Sigmoid colon (tissue), 7 donors: ENCODE measurements at regions of chr5 and their contacts with region 1.

Region 1: DNA sequence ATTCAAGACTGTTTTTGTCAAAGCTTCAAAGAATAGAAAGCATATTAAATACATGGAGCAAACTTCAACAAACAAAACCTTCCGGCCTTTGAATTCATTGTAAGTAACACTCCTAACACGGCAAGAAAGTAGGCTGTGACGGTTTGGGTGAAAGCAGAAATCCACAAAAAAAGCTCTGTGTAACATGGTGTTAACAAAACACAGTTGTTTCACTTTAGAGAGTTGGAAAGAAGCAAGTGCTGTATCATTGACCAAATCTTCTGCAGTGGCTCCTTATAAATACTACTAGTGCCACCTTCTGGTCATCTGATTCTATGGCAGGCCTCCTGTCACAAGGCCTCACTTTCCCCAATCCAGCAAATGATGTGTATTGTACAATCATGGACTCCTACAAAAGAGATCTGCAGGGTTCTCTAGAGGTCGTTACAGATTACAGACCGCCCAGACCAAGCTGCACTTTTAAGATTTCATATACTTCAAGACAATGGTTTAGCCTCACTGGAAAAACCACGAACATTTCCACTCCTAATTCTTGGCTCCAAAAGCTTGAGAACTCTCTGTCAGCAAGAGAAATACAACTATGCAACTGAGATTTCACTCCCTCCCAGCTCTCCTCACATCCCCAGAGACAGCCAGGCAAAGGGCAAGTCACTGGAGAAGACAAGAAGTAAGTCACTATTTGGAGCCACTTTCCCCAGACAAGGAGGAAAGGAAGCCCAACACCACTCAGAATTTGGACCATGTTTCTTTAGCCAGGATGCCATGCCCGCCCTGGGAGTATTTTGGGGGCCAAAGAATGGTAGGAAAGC is 196.2 kb downstream of the DTWD2 start:
- DNase-seq: no peak
- H3K4me3 ChIP-seq: peak overlapping the region in 3 of 4 donors; percentile 7 to 33 (median 28)
- H3K27ac ChIP-seq: peak overlapping the region in 3 of 4 donors; percentile 39 to 66 (median 63)
- H3K4me1 ChIP-seq: peaks cover 0 to 17% (median 8%) of the 10 kb centered on the region in 4 donors
- H3K27me3 ChIP-seq: no peaks in the 10 kb centered on the region
- CTCF ChIP-seq: peak; percentile 29 to 78 (median 62)
- EP300 ChIP-seq: no peak
- POLR2A ChIP-seq: no peak

Region 2: GRCh38 chr5:117454716-117455596 is 1337.2 kb before region 1 on chr5:
- intact Hi-C with region 1: loop called (anchors 5 kb)
- DNase-seq: no peak
- H3K4me3 ChIP-seq: no peak overlapping the region
- H3K27ac ChIP-seq: no peak overlapping the region
- H3K4me1 ChIP-seq: no peaks in the 10 kb centered on the region
- H3K27me3 ChIP-seq: no peaks in the 10 kb centered on the region
- CTCF ChIP-seq: peak in 3 of 4 experiments; percentile 47 to 61 (median 48)
- EP300 ChIP-seq: no peak
- POLR2A ChIP-seq: no peak

Region 3: DNA sequence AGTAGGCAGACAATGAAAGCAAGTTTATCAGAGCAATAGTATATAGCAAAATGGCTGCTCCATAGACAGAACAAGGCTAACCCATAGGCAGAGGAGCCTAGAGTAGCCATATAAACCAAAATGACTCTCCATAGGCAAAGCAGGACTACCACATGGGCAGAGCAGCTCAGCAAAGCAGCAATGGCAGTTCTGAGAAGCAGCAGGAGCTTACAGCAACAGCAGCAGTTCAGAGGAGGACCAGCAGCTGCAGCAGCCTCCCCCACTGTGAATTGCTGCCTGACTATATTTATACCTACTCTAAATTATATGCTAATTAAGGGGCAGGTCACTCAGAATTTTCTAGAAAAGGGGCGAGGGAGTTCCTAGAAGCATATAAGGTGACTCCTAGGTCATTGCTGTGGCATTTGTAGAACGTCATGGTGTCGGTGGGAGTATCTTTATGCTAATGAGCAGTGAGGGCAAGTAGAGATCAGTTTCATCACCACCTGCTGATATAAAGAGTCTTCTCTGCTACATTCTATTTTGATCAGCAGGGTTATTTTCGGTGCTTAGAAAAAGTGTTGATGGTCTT is 919.2 kb before region 1 on chr5:
- intact Hi-C with region 1: no loop called
- DNase-seq: no peak
- H3K4me3 ChIP-seq: no peak overlapping the region
- H3K27ac ChIP-seq: no peak overlapping the region
- H3K4me1 ChIP-seq: no peaks in the 10 kb centered on the region
- H3K27me3 ChIP-seq: no peaks in the 10 kb centered on the region
- CTCF ChIP-seq: no peak
- EP300 ChIP-seq: no peak
- POLR2A ChIP-seq: no peak

Region 4: GRCh38 chr5:118956727-118957126 is 164.6 kb after region 1 on chr5:
- intact Hi-C with region 1: no loop called
- DNase-seq: no peak
- H3K4me3 ChIP-seq: no peak overlapping the region
- H3K27ac ChIP-seq: no peak overlapping the region
- H3K4me1 ChIP-seq: no peaks in the 10 kb centered on the region
- H3K27me3 ChIP-seq: no peaks in the 10 kb centered on the region
- CTCF ChIP-seq: no peak
- EP300 ChIP-seq: no peak
- POLR2A ChIP-seq: no peak